ENCODE measurements at regions of chr6 and their contacts with region 1.

Region 1: DNA sequence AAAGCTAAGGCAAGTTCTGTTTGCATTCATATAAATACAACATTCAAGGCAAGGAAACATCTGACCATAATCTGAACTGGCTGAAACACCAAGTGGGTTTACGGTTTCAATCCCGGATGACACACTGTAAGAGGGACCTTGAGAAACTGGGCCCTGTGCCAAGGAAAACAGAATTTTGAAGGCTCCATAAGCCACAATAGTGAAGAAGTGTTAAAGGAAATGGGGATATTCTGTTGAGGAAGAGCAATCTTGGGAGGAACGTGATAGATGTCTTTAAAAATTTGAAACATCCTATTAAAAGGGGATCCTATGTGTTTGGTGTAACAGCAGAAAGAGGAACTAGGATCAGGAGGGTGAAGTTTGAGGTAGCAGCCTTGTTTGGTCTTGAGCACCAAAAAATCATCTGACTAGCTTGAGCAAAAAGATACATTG is 82.4 kb upstream of the TAB2 start:
- DNase-seq: no peak
- H3K4me3 Mint-ChIP-seq: no peak overlapping the region
- H3K27ac Mint-ChIP-seq: peak overlapping the region; percentile 91
- H3K4me1 Mint-ChIP-seq: peaks cover 53% of the 10 kb centered on the region
- H3K27me3 Mint-ChIP-seq: no peaks in the 10 kb centered on the region

Region 2: DNA sequence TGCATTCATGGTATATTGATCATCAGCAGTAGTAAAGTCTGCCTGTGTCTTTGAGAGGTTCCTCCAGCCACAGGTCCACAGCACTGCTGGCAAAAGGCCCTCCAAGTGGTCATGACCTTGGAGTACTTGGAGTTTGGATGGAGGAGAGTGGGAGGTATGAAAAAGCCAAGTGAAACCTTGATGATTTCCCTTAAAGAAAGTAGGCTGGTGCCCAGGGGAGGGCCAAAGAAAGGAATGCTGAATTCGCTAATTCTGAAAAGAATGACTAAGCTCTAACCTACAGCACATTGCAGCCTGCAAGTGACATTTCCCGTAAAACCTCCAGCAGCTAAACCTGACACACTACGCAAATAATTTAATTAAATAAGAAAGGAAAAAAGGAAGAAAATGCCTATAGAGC is 141.0 kb before region 1 on chr6:
- CTCF ChIA-PET with region 1: no interaction called
- POLR2A ChIA-PET with region 1: no interaction called
- intact Hi-C with region 1: loop called (anchors 1 kb)
- DNase-seq: peak; percentile 51
- H3K4me3 Mint-ChIP-seq: peak overlapping the region; percentile 45
- H3K27ac Mint-ChIP-seq: peak overlapping the region; percentile 93
- H3K4me1 Mint-ChIP-seq: peaks cover 67% of the 10 kb centered on the region
- H3K27me3 Mint-ChIP-seq: no peaks in the 10 kb centered on the region

Region 3: GRCh38 chr6:149190224-149190831 is 44.8 kb before region 1 on chr6:
- CTCF ChIA-PET with region 1: no interaction called
- POLR2A ChIA-PET with region 1: no interaction called
- intact Hi-C with region 1: loop called (anchors 2 kb)
- DNase-seq: peak; percentile 84
- H3K4me3 Mint-ChIP-seq: no peak overlapping the region
- H3K27ac Mint-ChIP-seq: peak overlapping the region; percentile 16
- H3K4me1 Mint-ChIP-seq: peaks cover 41% of the 10 kb centered on the region
- H3K27me3 Mint-ChIP-seq: no peaks in the 10 kb centered on the region

Region 4: GRCh38 chr6:149271348-149272340 is 36.5 kb after region 1 on chr6:
- CTCF ChIA-PET with region 1: interaction called, 3 read pairs
- POLR2A ChIA-PET with region 1: no interaction called
- intact Hi-C with region 1: loop called (anchors 1 kb)
- DNase-seq: peak; percentile 85
- H3K4me3 Mint-ChIP-seq: peak overlapping the region; percentile 45
- H3K27ac Mint-ChIP-seq: peak overlapping the region; percentile 93
- H3K4me1 Mint-ChIP-seq: peaks cover 35% of the 10 kb centered on the region
- H3K27me3 Mint-ChIP-seq: no peaks in the 10 kb centered on the region

Region 5: GRCh38 chr6:149335924-149336608 is 100.9 kb after region 1 on chr6:
- CTCF ChIA-PET with region 1: no interaction called
- POLR2A ChIA-PET with region 1: no interaction called
- intact Hi-C with region 1: loop called (anchors 1 kb)
- DNase-seq: peak; percentile 75
- H3K4me3 Mint-ChIP-seq: peak overlapping the region; percentile 62
- H3K27ac Mint-ChIP-seq: peak overlapping the region; percentile 95
- H3K4me1 Mint-ChIP-seq: peaks cover 86% of the 10 kb centered on the region
- H3K27me3 Mint-ChIP-seq: no peaks in the 10 kb centered on the region

Measured in activated CD4-positive, alpha-beta memory T cell treated with anti-CD3 and anti-CD28 coated beads for 36 hours (primary cell).